Activated CD4-positive, alpha-beta T cell treated with anti-CD3 and anti-CD28 coated beads for 36 hours (primary cell): ENCODE measurements at regions of chr9 and their contacts with region 1.

Region 1: DNA sequence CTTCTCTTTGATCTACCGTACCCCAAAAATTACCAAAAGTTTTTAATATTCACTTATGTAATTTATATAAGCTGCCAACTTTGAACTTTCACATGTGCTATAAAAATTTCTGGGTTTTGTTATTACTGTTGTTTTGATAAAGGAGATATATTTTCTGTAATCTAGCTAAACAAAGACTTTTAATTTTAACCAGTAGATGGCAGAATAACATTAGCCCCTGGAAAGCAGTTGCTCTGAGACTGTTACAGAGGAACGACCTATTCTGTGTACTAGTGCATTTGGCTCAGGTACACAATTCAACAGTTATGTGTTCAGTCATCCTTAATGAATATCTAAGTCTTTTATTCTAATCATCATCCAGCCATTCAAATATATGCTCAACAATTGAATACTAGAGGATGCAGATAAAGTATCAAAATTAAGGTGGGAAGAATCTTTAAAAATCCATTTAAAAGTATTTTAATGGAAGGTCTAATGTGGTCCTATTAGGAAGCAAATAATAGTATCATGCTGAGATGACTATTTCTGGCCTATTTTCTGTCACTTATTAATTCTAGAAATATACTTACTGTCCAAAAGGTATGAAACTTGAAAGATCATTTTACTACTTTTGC is 8.6 kb downstream of the KLHL9 start:
- DNase-seq: no peak
- ATAC-seq: peak; percentile 84
- H3K4me3 Mint-ChIP-seq: no peak overlapping the region
- H3K27ac Mint-ChIP-seq: no peak overlapping the region
- H3K4me1 Mint-ChIP-seq: peaks cover 44% of the 10 kb centered on the region
- H3K27me3 Mint-ChIP-seq: no peaks in the 10 kb centered on the region

Region 2: DNA sequence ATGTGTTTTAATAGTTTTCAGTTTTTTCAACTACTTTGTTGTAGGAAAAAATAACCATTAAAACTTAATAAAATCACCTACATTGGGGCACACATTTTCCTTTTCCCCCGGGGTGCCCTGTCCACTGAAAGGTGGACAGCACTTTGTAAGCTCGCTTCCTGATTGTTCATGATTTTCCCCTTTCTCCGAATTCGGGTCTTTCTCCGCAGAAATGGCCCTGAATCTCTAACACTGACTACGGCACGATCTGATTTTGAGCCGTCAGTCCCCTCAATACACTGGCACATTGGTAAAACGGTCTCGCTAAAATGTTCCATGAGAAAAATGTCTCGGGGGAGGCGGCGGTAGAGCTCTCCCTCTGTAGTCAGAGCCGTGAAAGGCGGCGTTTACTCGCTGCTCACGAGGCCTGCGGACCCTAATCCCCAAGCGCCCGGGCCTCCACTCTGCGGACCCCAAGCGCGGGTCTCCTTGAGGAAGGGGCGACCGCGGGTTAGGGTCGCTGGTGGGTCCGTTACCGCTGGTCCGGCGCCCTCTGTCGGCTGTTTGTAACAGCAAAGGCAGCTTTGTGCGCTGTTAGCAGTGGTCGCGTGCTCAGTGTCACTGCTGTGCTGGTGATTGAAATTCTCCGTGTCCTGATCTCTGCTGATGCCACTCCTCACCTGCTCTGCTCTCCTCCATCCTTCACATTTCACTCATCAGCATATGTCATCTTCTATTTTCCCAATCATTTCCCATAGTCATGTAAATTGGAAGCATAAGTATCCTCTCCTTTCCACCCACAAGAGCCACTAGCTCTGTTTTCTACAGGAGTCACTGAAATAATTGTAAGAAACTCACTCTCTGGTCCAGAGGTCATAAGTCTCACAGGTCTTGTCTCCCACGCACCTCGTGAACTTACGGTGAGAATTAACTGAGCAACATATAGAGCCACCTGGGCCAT is 69.4 kb after region 1 on chr9:
- CTCF ChIA-PET with region 1: interaction called, 95 read pairs
- POLR2A ChIA-PET with region 1: interaction called, 3 read pairs
- intact Hi-C with region 1: loop called (anchors 1 kb)
- DNase-seq: peak; percentile 78
- ATAC-seq: peak; percentile 74
- H3K4me3 Mint-ChIP-seq: peak overlapping the region; percentile 52
- H3K27ac Mint-ChIP-seq: peak overlapping the region; percentile 66
- H3K4me1 Mint-ChIP-seq: peaks cover 15% of the 10 kb centered on the region
- H3K27me3 Mint-ChIP-seq: peaks cover 47% of the 10 kb centered on the region

Region 3: GRCh38 chr9:21455320-21455719 is 128.7 kb after region 1 on chr9:
- CTCF ChIA-PET with region 1: interaction called, 37 read pairs
- POLR2A ChIA-PET with region 1: no interaction called
- intact Hi-C with region 1: loop called (anchors 1 to 2 kb)
- DNase-seq: peak; percentile 37
- ATAC-seq: peak; percentile 70
- H3K4me3 Mint-ChIP-seq: no peak overlapping the region
- H3K27ac Mint-ChIP-seq: no peak overlapping the region
- H3K4me1 Mint-ChIP-seq: no peaks in the 10 kb centered on the region
- H3K27me3 Mint-ChIP-seq: peaks cover 2% of the 10 kb centered on the region

Region 4: GRCh38 chr9:21559424-21560280 is 233.0 kb after region 1 on chr9:
- CTCF ChIA-PET with region 1: interaction called, 3 read pairs
- POLR2A ChIA-PET with region 1: no interaction called
- intact Hi-C with region 1: loop called (anchors 5 to 10 kb)
- DNase-seq: peak; percentile 69
- ATAC-seq: peak; percentile 88
- H3K4me3 Mint-ChIP-seq: peak overlapping the region; percentile 86
- H3K27ac Mint-ChIP-seq: no peak overlapping the region
- H3K4me1 Mint-ChIP-seq: peaks cover 33% of the 10 kb centered on the region
- H3K27me3 Mint-ChIP-seq: peaks cover 30% of the 10 kb centered on the region